ENCODE measurements at regions of chr3 and their contacts with region 1.

Region 1: DNA sequence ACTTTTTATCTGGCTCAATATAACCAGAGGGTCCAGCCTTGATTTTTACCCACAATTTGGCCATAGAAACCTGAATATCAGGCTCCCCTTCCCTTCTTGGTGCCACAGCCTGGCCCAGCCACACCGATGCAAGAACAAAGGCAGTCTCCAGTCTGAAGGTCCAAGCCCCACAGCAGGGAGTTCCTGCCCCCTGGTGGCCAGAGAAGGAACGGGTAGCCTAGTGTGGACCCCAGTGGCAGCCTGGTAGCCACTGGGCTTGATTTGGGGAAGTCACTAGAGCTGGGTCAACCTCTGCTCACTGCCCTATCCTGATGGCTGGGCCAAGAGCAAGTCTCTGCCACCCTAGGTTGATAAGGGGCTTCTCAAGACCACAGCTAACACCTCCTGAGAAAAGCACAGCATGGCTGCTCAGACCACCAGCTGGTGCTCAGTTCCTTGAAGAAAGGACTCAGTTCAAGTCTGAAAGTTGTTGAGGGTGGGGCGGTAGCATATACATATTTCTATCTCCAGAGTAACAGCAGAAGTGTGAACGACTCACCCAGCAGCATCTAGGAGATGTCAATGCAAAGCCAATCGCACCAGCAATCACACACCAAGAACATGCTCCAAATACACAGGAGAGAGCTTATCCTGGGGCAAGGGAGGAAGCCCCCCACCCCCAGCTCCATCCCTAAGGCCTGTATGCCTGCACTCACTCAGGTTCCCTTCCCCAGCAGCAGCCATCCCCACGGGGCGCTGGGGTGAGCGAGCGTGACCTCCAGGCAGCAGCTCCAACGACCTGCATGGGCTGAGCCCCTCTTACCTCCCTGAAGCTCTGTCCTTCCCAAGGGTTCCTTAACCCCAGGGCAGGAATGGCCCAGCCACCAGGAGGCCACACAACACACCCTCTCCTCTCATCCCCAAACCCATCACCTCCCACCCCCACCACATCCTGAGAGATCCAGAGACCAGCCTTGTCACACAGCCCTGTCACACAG is 7.6 kb downstream of the PFKFB4 start:
- DNase-seq: no peak
- ATAC-seq: peak; percentile 100
- H3K4me3 ChIP-seq: no peak overlapping the region
- H3K27ac ChIP-seq: no peak overlapping the region
- H3K4me1 ChIP-seq: no peaks in the 10 kb centered on the region; the same call in 1 of the 2 replicates
- H3K27me3 ChIP-seq: no peaks in the 10 kb centered on the region
- CTCF ChIP-seq: peak; percentile 90 to 95 (median 95)
- EP300 ChIP-seq: no peak
- POLR2A ChIP-seq: no peak
- RAD21 ChIP-seq: peak; percentile 93

Region 2: GRCh38 chr3:48352547-48352946 is 196.5 kb before region 1 on chr3:
- CTCF ChIA-PET with region 1: no interaction called
- POLR2A ChIA-PET with region 1: no interaction called
- RAD21 ChIA-PET with region 1: no interaction called
- SMC1A ChIA-PET with region 1: no interaction called
- in situ Hi-C with region 1: no loop called
- intact Hi-C with region 1: no loop called
- DNase-seq: no peak
- ATAC-seq: no peak
- H3K4me3 ChIP-seq: no peak overlapping the region
- H3K27ac ChIP-seq: no peak overlapping the region
- H3K4me1 ChIP-seq: no peaks in the 10 kb centered on the region
- H3K27me3 ChIP-seq: no peaks in the 10 kb centered on the region; a peak in 1 of 4 replicates
- CTCF ChIP-seq: no peak
- EP300 ChIP-seq: no peak
- POLR2A ChIP-seq: no peak
- RAD21 ChIP-seq: no peak

Region 3: DNA sequence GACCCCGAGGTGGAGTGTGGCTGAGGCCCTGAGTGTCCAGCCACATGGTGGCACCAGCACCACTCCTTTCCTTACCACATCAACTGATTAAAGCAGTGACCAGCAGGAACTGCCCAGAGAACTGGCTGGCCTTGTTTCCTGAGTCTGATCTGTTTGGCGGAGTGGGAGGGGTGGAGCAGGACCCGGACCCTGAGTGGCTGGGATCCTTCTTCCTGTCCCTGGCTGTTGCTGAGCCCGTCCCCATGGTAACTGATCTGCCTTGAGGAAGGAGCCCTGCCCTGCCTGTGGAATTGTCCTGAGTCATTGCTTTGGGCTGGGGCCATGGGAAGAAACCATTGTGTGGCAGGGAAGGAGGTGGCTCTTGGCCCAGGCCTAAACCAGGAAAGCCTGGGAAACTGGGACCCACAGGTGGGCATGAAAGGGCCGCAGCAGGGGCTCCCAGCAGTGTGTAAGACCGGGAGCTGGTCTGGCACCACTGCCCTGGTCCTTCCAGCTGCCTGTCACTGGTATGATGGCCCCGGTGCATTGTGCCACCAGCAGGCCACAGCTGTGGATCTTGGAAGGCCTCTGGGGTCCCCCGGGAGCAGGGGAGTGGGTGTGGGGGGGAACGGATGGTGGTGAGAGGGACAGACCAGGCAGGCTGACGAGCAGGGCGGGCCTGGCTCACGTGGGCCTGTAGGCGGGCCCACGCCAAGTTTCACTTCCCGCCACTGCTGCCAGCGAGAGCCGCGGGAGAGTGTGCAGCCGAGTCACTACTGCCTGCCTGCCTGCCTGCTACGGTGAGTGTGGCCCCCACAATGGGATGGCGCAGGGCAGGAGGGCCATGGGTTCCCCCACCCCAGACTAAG is 83.3 kb before region 1 on chr3:
- CTCF ChIA-PET with region 1: interaction called, 58 read pairs
- POLR2A ChIA-PET with region 1: interaction called, 4 read pairs
- RAD21 ChIA-PET with region 1: interaction called, 20 read pairs
- SMC1A ChIA-PET with region 1: interaction called, 7 read pairs
- in situ Hi-C with region 1: no loop called
- intact Hi-C with region 1: loop called (anchors 1 kb)
- DNase-seq: no peak
- ATAC-seq: peak; percentile 94
- H3K4me3 ChIP-seq: peak overlapping the region; percentile 88
- H3K27ac ChIP-seq: peak overlapping the region; percentile 96
- H3K4me1 ChIP-seq: peaks cover 41% of the 10 kb centered on the region
- H3K27me3 ChIP-seq: no peaks in the 10 kb centered on the region
- CTCF ChIP-seq: peak; percentile 52 to 67 (median 56); a peak in 5 of 6 replicates
- EP300 ChIP-seq: no peak
- POLR2A ChIP-seq: peak; percentile 98
- RAD21 ChIP-seq: peak; percentile 64

Region 4: DNA sequence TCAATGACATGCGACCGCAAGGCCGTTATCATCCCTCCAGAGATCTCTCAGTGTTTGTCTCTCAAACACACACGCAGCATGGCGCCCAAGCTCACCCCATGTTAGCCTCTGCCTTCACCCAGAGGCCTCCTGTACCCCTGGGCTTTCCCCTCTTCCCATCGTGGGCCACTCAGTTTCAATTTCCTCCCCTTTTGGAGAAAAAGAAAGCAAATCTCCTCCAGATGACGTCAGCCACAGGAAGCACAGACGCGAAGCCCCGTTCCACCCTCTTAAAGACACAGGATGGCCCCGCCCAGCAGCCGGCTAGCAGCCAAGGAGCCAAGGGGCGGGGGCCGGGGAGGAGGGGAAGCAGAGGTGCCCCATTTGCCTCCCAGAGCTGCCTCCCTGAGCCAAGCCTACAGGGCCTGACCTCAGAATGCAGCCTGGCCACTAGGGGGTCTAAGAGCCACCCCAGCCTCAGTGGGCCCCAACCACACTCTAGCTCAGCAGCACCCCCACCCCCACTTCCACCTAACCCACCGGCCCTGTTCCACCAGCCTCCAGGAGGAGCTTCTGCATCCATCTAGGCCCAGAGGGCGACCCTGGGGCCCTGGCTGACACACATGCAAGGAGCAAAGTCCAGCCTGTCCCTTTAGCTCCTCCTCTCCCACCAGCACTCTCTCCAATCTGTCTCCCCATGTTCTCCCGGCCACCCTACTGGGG is 76.0 kb before region 1 on chr3:
- CTCF ChIA-PET with region 1: interaction called, 58 read pairs
- POLR2A ChIA-PET with region 1: interaction called, 6 read pairs
- RAD21 ChIA-PET with region 1: interaction called, 11 read pairs
- SMC1A ChIA-PET with region 1: interaction called, 6 read pairs
- in situ Hi-C with region 1: no loop called
- intact Hi-C with region 1: no loop called
- DNase-seq: peak; percentile 96
- ATAC-seq: peak; percentile 91
- H3K4me3 ChIP-seq: peak overlapping the region; percentile 71
- H3K27ac ChIP-seq: peak overlapping the region; percentile 100
- H3K4me1 ChIP-seq: peaks cover 31% of the 10 kb centered on the region
- H3K27me3 ChIP-seq: no peaks in the 10 kb centered on the region
- CTCF ChIP-seq: peak; percentile 35 to 55 (median 54); a peak in 5 of 6 replicates
- EP300 ChIP-seq: peak; percentile 59 to 64; a peak in 2 of 4 replicates
- POLR2A ChIP-seq: peak; percentile 88
- RAD21 ChIP-seq: no peak

Region 5: DNA sequence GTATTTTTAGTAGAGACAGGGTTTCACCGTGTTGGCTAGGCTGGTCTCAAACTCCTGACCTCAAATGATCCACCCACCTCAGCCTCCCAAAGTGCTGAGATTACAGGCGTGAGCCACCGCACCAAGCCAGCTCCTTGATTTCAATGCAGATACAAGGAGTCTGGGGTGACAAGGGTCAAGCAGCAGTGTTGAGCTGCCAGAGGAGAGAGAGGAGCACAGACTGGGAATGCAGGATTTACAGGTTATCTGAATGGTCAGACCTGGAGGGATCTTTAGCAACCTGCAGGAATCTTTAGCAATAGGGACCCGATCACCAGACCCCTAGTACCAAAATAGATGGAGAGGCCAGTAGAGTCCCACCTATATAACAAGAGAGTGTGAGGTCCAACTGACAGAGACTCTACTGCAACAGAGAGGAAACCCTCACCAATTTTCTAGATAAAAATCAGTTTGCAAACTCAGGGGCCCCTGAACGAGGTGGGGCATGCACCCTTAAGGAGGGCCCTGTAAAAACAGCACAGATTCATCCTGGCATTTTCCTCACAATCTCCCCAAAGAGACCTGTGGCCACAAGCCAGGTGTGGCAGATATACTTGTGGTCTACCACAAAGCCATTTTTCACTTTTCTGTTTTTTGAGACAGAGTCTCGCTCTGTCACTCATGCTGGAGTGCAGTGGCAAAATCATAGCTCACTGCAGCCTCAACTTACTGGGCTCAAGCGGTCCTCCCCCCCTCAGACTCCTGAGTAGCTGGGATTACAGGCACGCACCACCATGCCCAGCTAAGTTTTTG is 34.4 kb before region 1 on chr3:
- CTCF ChIA-PET with region 1: no interaction called
- POLR2A ChIA-PET with region 1: interaction called, 3 read pairs
- RAD21 ChIA-PET with region 1: no interaction called
- SMC1A ChIA-PET with region 1: interaction called, 3 read pairs
- in situ Hi-C with region 1: no loop called
- intact Hi-C with region 1: loop called (anchors 5 kb)
- DNase-seq: no peak
- ATAC-seq: peak; percentile 57
- H3K4me3 ChIP-seq: no peak overlapping the region
- H3K27ac ChIP-seq: no peak overlapping the region
- H3K4me1 ChIP-seq: peaks cover 12% of the 10 kb centered on the region
- H3K27me3 ChIP-seq: no peaks in the 10 kb centered on the region
- CTCF ChIP-seq: no peak
- EP300 ChIP-seq: no peak
- POLR2A ChIP-seq: no peak
- RAD21 ChIP-seq: no peak

Region 6: DNA sequence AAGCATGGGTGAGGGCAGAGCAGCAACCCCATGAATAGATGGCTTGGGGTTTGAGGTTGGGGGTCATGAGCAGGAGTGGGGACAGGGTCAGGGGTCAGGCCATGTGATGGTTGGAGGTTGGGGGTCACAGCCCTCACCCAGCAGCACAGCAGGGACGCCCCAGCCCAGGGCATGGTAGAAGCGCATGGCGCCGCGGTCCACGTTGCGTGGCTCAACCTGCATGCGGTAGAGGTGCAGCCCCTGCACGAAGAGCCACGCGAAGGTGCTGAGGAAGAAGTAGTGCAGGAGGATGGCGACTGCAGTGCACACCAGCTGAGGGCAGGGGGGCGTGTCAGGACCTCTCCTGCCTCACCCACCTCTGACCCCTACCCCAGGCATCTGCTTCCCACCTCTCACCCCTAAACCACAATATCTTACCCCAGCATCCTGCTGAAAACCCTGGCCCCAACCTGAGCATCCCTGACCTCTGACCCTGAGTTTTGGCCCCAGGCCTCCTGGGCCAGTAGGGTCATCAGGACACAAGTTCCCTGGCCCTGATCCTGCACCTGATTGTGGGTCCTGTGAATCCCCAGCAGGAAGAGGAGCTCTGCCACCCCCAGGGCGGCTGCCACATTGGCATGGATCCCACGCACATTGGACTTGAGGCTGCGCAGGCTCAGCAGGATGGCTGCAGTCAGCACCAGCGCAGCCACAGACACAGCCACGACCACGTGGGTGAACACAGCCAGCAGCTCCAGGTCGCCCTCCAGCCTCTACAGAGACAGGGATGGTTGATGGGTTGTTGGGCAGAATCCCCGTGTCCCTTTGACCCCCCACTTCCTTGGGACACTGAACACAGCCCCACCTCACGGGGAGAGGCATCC is 96.1 kb after region 1 on chr3:
- CTCF ChIA-PET with region 1: no interaction called
- POLR2A ChIA-PET with region 1: no interaction called
- RAD21 ChIA-PET with region 1: no interaction called
- SMC1A ChIA-PET with region 1: no interaction called
- in situ Hi-C with region 1: no loop called
- intact Hi-C with region 1: no loop called
- DNase-seq: no peak
- ATAC-seq: no peak
- H3K4me3 ChIP-seq: no peak overlapping the region
- H3K27ac ChIP-seq: no peak overlapping the region
- H3K4me1 ChIP-seq: no peaks in the 10 kb centered on the region
- H3K27me3 ChIP-seq: no peaks in the 10 kb centered on the region
- CTCF ChIP-seq: no peak
- EP300 ChIP-seq: no peak
- POLR2A ChIP-seq: no peak
- RAD21 ChIP-seq: no peak

Measured in GM12878 (cell line).